Activated naive CD4-positive, alpha-beta T cell treated with anti-CD3 and anti-CD28 coated beads, Interleukin-2, amount 10 ng/mL, durations not matched to agents 7 days and 5 days (primary cell): ENCODE measurements at regions of chr15 and their contacts with region 1.

Region 1: DNA sequence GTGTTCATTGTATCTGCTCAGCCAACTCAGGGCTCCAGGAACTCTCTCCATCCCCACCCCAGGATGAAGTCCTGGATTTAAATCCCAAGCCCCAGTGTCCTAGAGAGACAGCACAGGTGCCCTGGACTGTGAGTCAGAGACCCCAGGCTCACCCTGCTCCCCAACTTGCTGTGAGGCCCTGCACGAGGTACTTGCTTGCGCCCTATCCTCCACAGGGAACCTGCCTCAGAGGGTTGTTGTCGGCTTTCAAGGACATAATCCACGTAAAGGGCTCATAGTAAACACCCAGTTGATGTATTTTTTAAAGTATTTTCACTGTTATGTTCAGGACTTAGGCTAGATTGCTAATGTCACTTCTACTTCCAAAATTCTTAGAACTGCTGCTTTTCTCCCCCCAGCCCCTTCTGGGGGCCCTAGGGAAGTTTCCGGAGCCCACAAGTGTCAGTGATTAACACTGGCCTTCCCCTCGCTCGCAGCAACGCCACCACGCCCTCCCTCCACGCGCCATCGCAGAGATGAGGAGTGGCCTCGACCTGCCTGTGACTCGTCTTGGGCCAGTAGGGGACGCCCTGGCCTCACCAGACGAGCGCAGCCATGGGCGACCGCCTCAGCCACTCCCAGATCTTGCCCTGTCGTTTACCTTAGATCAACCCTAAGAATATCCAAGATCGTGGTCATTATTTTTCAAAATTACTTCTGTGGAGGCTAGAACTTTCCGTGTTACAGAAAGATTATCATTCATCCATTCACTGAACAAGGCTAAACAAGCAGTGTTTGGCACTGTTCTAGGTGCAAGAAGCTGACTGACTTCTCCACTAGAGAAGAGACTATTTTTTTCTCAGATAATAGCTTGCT is 6.0 kb upstream of the SRP14 start:
- DNase-seq: peak; percentile 89
- H3K4me3 Mint-ChIP-seq: peak overlapping the region; percentile 19
- H3K27ac Mint-ChIP-seq: peak overlapping the region; percentile 74
- H3K4me1 Mint-ChIP-seq: peaks cover 84% of the 10 kb centered on the region
- H3K27me3 Mint-ChIP-seq: no peaks in the 10 kb centered on the region

Region 2: GRCh38 chr15:39504808-39505207 is 540.1 kb before region 1 on chr15:
- CTCF ChIA-PET with region 1: no interaction called
- DNase-seq: no peak
- H3K4me3 Mint-ChIP-seq: no peak overlapping the region
- H3K27ac Mint-ChIP-seq: no peak overlapping the region
- H3K4me1 Mint-ChIP-seq: no peaks in the 10 kb centered on the region
- H3K27me3 Mint-ChIP-seq: peaks cover 8% of the 10 kb centered on the region

Region 3: GRCh38 chr15:39869858-39870515 is 175.0 kb before region 1 on chr15:
- CTCF ChIA-PET with region 1: no interaction called
- DNase-seq: no peak
- H3K4me3 Mint-ChIP-seq: no peak overlapping the region
- H3K27ac Mint-ChIP-seq: no peak overlapping the region
- H3K4me1 Mint-ChIP-seq: no peaks in the 10 kb centered on the region
- H3K27me3 Mint-ChIP-seq: peaks cover 31% of the 10 kb centered on the region

Region 4: GRCh38 chr15:40160689-40161688 is 116.0 kb after region 1 on chr15 and contains the start of gene BUB1B:
- CTCF ChIA-PET with region 1: interaction called, 24 read pairs
- DNase-seq: peak; percentile 96
- H3K4me3 Mint-ChIP-seq: no peak within 1 kb of the TSS
- H3K27ac Mint-ChIP-seq: no peak within 1 kb of the TSS
- H3K4me1 Mint-ChIP-seq: peaks cover 11% of the 10 kb centered on the region
- H3K27me3 Mint-ChIP-seq: peaks cover 16% of the 10 kb centered on the region